CD8-positive, alpha-beta memory T cell (primary cell): ENCODE measurements at regions of chr6 and their contacts with region 1.

Region 1: GRCh38 chr6:73129653-73130443 is 95.4 kb downstream of the KHDC1L start:
- DNase-seq: peak; percentile 62 to 80 (median 67)
- H3K4me3 ChIP-seq: no peak overlapping the region
- H3K4me3 Mint-ChIP-seq: peak overlapping the region in 4 of 7 donors; percentile 9 to 63 (median 41)
- H3K27ac ChIP-seq: no peak overlapping the region
- H3K27ac Mint-ChIP-seq: no peak overlapping the region
- H3K4me1 ChIP-seq: no peaks in the 10 kb centered on the region
- H3K4me1 Mint-ChIP-seq: peaks cover 2 to 10% (median 6%) of the 10 kb centered on the region in 3 donors
- H3K27me3 ChIP-seq: no peaks in the 10 kb centered on the region
- H3K27me3 Mint-ChIP-seq: no peaks in the 10 kb centered on the region

Region 2: DNA sequence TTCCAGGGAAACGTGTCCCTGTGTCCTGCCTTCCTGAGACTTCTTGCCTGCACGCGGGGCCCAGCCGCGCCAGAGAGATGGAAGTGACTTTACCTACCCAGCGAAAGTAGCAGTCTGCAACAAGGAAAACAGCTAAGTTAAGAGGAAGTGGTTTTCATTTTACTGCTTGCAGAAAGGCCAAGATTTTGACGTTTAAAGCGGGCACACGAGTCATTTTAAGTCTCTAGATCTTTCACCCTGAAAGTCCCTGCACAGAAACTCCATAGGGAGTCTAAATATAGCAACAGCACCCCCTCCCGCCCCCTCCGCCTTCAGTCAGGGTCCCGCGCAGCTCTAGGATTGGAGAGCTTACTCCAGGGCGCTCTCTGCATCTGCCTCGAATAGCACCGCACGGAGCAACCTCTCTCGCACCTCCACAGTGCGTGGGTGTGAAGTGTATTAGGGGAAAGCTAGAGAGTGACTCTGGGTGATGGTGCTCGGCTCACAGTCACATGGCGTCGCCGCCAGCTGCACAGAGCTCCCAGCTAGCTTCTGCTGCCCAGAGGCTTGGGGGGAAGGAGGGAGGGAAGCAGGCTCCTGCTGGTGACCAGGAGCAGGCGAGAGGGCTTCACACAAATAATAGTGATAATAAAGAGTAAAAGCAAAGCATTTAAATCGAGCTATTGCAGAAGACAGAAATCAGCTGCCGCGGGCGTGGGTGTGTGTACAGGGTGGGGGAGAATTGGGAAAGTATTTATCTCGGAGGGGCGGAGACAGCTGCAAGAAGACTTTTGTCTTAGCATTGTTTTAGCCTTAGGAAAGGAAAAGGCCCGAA is 509.8 kb before region 1 on chr6:
- CTCF ChIA-PET with region 1: interaction called, 48 read pairs
- POLR2A ChIA-PET with region 1: no interaction called
- DNase-seq: peak; percentile 34 to 73 (median 58)
- H3K4me3 ChIP-seq: peak overlapping the region; percentile 74
- H3K4me3 Mint-ChIP-seq: peak overlapping the region; percentile 90 to 97 (median 93)
- H3K27ac ChIP-seq: peak overlapping the region; percentile 2
- H3K27ac Mint-ChIP-seq: peak overlapping the region; percentile 70 to 95 (median 92)
- H3K4me1 ChIP-seq: peaks cover 22% of the 10 kb centered on the region
- H3K4me1 Mint-ChIP-seq: peaks cover 35 to 64% (median 57%) of the 10 kb centered on the region in 3 donors
- H3K27me3 ChIP-seq: no peaks in the 10 kb centered on the region
- H3K27me3 Mint-ChIP-seq: no peaks in the 10 kb centered on the region